H1 (cell line): ENCODE measurements at regions of chr1 and their contacts with region 1.

Region 1: DNA sequence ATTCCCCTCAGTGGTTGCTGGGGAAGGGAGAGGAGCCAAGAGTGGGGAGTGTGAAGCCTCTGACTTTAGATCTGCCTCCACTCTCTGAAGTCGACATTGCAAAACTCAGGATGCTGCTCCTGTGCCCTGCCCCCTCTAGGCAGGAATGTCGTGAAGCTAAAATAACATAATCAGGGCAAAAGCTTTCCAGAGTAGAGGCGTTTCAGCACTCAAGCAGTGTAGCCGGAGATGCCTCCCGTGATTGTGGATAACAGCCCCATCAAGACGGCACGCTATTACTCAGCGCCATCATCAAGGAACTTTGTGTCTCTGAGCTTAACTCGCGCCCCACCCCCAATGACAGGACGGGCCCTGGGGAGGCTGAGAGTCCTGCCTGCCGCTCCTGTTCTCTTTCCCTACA is 60.0 kb downstream of the FBXO2 start:
- DNase-seq: peak in 1 of 2 experiments; percentile 23
- H3K4me3 ChIP-seq: peak overlapping the region in 1 of 4 experiments; percentile 12; a peak in 2 of 8 replicates
- H3K27ac ChIP-seq: no peak overlapping the region
- H3K4me1 ChIP-seq: peaks cover 2 to 8% (median 5%) of the 10 kb centered on the region in 4 experiments
- H3K27me3 ChIP-seq: peaks cover 0 to 3% (median 0%) of the 10 kb centered on the region in 4 experiments; a peak in 1 of 7 replicates
- CTCF ChIP-seq: peak; percentile 46 to 70 (median 54)
- EP300 ChIP-seq: no peak
- POLR2A ChIP-seq: no peak
- RAD21 ChIP-seq: peak; percentile 45 to 49; a peak in 3 of 4 replicates

Region 2: GRCh38 chr1:11504599-11504998 is 89.6 kb before region 1 on chr1:
- CTCF ChIA-PET with region 1: no interaction called
- POLR2A ChIA-PET with region 1: no interaction called
- DNase-seq: no peak
- H3K4me3 ChIP-seq: no peak overlapping the region
- H3K27ac ChIP-seq: no peak overlapping the region
- H3K4me1 ChIP-seq: peaks cover 4 to 14% (median 8%) of the 10 kb centered on the region in 4 experiments; a peak in 6 of 7 replicates
- H3K27me3 ChIP-seq: no peaks in the 10 kb centered on the region
- CTCF ChIP-seq: no peak
- EP300 ChIP-seq: no peak
- POLR2A ChIP-seq: no peak
- RAD21 ChIP-seq: no peak

Region 3: DNA sequence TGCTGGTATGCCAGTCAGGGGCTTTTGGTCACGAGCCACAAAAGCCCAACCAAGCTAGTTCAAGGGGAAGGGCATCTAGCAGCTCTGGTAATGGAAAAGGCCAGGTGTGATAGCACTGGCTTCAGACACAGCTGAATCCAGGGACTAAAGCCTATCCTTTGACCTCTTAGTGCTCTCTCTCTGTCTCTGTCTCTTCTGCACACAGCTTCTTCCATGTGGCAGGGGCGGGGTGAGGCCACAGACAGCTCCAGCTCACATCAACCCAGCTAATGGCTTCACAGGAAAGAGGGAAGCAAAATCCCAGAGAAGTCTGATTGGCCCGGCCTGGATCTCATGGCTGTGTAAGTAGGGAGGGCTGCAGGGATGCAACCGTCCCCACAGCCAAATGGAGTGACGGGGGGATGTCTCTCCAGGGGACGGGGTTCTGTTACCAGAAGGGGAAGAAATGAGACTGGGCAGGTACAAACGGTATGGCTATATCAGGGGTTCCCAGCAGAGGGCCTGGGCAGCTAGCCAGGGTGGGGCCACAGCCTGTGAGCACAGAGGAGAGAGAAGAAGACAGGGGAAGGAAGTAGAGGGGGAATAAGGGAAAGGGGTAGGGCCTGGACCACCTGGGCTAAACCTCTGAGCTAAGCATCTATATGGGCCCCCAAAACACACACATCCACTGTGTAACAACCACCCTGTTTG is 17.6 kb after region 1 on chr1:
- CTCF ChIA-PET with region 1: interaction called, 32 read pairs
- POLR2A ChIA-PET with region 1: interaction called, 4 read pairs
- DNase-seq: no peak
- H3K4me3 ChIP-seq: no peak overlapping the region
- H3K27ac ChIP-seq: no peak overlapping the region
- H3K4me1 ChIP-seq: no peaks in the 10 kb centered on the region
- H3K27me3 ChIP-seq: no peaks in the 10 kb centered on the region
- CTCF ChIP-seq: peak in 2 of 3 experiments; percentile 2 to 22; a peak in 3 of 4 replicates
- EP300 ChIP-seq: no peak
- POLR2A ChIP-seq: no peak
- RAD21 ChIP-seq: peak; percentile 11 to 25; a peak in 2 of 4 replicates

Region 4: GRCh38 chr1:11617310-11617709 is 23.1 kb after region 1 on chr1:
- CTCF ChIA-PET with region 1: interaction called, 32 read pairs
- POLR2A ChIA-PET with region 1: interaction called, 4 read pairs
- DNase-seq: no peak
- H3K4me3 ChIP-seq: no peak overlapping the region
- H3K27ac ChIP-seq: no peak overlapping the region
- H3K4me1 ChIP-seq: no peaks in the 10 kb centered on the region
- H3K27me3 ChIP-seq: peaks cover 0 to 2% (median 0%) of the 10 kb centered on the region in 4 experiments; a peak in 1 of 7 replicates
- CTCF ChIP-seq: peak in 2 of 3 experiments; percentile 21 to 22; a peak in 2 of 4 replicates
- EP300 ChIP-seq: no peak
- POLR2A ChIP-seq: no peak
- RAD21 ChIP-seq: peak in 1 of 2 experiments; percentile 29; a peak in 1 of 4 replicates

Region 5: DNA sequence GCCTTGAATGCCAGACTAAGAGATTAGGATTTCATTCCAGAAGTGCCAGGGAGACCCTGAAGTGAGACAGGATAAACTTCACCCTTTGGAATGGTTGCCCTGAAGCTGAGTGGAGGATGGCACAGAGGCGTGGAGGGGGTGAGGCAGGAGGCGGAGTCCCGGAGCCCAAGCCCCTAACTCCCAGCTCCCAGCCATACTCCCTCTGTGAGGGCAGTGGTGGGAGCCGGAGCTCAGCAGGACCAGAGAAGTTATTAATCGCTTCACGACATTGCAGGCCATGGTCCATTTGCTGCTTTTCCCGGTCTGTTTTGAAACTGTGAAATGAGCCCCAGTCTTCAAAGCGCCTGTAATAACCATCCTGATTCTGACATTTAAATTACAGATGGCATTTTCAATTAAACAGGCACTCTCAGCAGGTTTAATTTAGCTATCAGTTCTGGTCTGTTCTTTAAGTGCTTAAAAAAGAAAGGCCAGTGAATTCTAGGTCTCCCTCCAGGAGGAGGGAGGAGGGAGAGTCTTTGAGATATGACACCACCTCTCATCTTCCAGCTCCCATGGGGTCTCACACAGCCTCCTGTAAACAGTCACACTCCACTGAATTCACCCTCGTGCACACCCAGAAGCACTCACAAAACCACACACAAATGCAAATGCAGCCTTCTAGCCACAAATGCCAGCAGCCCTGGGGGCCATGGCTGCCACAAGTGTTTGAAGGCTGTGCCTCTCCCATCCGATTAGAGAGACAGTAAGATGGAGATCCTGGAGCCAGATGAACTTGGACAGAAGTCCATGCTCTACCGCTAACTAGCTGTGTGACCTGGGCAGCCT is 40.4 kb after region 1 on chr1:
- CTCF ChIA-PET with region 1: no interaction called
- POLR2A ChIA-PET with region 1: no interaction called
- DNase-seq: no peak
- H3K4me3 ChIP-seq: no peak overlapping the region
- H3K27ac ChIP-seq: no peak overlapping the region
- H3K4me1 ChIP-seq: no peaks in the 10 kb centered on the region
- H3K27me3 ChIP-seq: no peaks in the 10 kb centered on the region; a peak in 1 of 7 replicates
- CTCF ChIP-seq: no peak
- EP300 ChIP-seq: no peak
- POLR2A ChIP-seq: no peak
- RAD21 ChIP-seq: no peak